SK-N-SH (cell line): ENCODE measurements at regions of chr11 and their contacts with region 1.

Region 1: GRCh38 chr11:72160319-72160718 is 24.8 kb downstream of the FOLR3 start:
- DNase-seq: no peak
- H3K4me3 ChIP-seq: no peak overlapping the region
- H3K27ac ChIP-seq: no peak overlapping the region
- H3K4me1 ChIP-seq: no peaks in the 10 kb centered on the region
- H3K27me3 ChIP-seq: peaks cover 12% of the 10 kb centered on the region; the same call in 1 of the 2 replicates
- CTCF ChIP-seq: no peak
- EP300 ChIP-seq: no peak
- RAD21 ChIP-seq: no peak

Region 2: GRCh38 chr11:72179804-72180396 is 19.6 kb after region 1 on chr11:
- CTCF ChIA-PET with region 1: interaction called, 13 read pairs
- POLR2A ChIA-PET with region 1: no interaction called
- DNase-seq: no peak
- H3K4me3 ChIP-seq: no peak overlapping the region
- H3K27ac ChIP-seq: no peak overlapping the region
- H3K4me1 ChIP-seq: no peaks in the 10 kb centered on the region
- H3K27me3 ChIP-seq: peaks cover 4% of the 10 kb centered on the region; the same call in 1 of the 2 replicates
- CTCF ChIP-seq: no peak
- EP300 ChIP-seq: no peak
- RAD21 ChIP-seq: no peak